Dorsolateral prefrontal cortex (tissue), 120 donors: ENCODE measurements at regions of chr9 and their contacts with region 1.

Region 1: GRCh38 chr9:137240861-137241489 is at the start of gene TUBB4B:
- DNase-seq: peak; percentile 99 to 100 (median 100)
- H3K4me3 ChIP-seq: peak within 1 kb of the TSS; percentile 74 to 98 (median 86)
- H3K27ac ChIP-seq: peak within 1 kb of the TSS; percentile 79 to 99 (median 98)
- H3K27me3 ChIP-seq: no peaks in the 10 kb centered on the region
- CTCF ChIP-seq: peak in 13 of 56 donors; percentile 2 to 54 (median 17)
- total RNA-seq, gene TUBB4B: 132 to 331 (median 230) TPM

Region 2: DNA sequence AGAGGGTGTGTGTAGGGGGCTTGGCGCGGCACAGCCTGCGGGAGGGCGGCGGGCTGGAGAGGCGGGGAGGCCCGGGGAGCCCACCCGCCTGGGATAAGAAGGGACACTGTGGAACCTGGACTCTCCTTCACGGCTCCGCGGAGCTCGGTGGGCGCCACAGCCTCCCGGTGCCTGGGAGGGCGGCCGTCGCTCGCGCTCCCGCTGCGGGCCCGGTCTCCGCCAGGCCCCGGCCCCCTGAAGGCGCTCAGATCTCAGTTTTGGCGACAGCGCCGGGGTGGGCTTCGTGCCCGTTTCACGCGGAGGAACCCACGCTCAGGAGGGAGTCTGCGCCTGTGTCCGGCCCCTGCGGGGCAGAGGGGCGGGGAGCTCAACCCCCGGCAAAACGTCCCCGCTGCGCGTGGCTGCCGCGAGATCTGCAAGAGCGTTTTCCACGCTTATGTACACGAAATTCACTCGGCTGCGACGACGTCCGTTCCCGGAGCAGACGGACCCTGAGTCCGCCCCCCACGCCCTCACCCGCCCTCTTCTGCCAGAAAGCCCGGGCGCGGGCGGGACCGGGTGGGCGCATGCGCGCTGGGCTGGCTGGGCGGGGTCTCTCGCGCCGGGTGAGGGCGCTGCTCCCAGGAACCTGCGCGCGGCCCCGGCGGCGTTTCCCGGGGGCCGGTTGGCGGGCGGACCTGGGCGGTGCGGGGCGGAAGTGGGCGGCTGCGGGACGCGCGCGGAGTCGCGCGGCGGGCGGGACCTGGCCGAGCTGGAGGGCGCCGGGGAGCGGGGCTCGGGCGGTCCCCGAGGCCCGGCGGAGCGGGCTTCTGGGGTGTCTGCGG is 13.9 kb after region 1 on chr9 and contains the start of gene NELFB:
- intact Hi-C with region 1: loop called (anchors 2 kb)
- DNase-seq: peak; percentile 80 to 97 (median 90)
- H3K4me3 ChIP-seq: peak within 1 kb of the TSS; percentile 83 to 100 (median 98)
- H3K27ac ChIP-seq: peak within 1 kb of the TSS in 57 of 59 donors; percentile 16 to 95 (median 86)
- H3K27me3 ChIP-seq: no peaks in the 10 kb centered on the region
- CTCF ChIP-seq: peak in 49 of 56 donors; percentile 8 to 73 (median 43)
- total RNA-seq, gene NELFB: 50.4 to 106 (median 64.4) TPM